ENCODE measurements at regions of chr3 and their contacts with region 1.

Region 1: GRCh38 chr3:100603469-100603868 is 5.9 kb upstream of the ADGRG7 start:
- DNase-seq: peak; percentile 44 to 63
- H3K4me3 ChIP-seq: no peak overlapping the region
- H3K4me3 Mint-ChIP-seq: peak overlapping the region; percentile 69
- H3K27ac Mint-ChIP-seq: peak overlapping the region; percentile 81
- H3K4me1 ChIP-seq: peaks cover 37% of the 10 kb centered on the region
- H3K4me1 Mint-ChIP-seq: peaks cover 47% of the 10 kb centered on the region
- H3K27me3 ChIP-seq: no peaks in the 10 kb centered on the region
- H3K27me3 Mint-ChIP-seq: no peaks in the 10 kb centered on the region
- CTCF ChIP-seq: peak; percentile 32 to 68

Region 2: GRCh38 chr3:99997293-99997692 is 606.2 kb before region 1 on chr3:
- CTCF ChIA-PET with region 1: no interaction called
- POLR2A ChIA-PET with region 1: no interaction called
- intact Hi-C with region 1: no loop called
- DNase-seq: no peak
- H3K4me3 ChIP-seq: no peak overlapping the region
- H3K4me3 Mint-ChIP-seq: no peak overlapping the region
- H3K27ac Mint-ChIP-seq: no peak overlapping the region
- H3K4me1 ChIP-seq: peaks cover 5% of the 10 kb centered on the region
- H3K4me1 Mint-ChIP-seq: peaks cover 6% of the 10 kb centered on the region
- H3K27me3 ChIP-seq: no peaks in the 10 kb centered on the region
- H3K27me3 Mint-ChIP-seq: no peaks in the 10 kb centered on the region
- CTCF ChIP-seq: no peak

Region 3: GRCh38 chr3:100455841-100456550 is 147.5 kb before region 1 on chr3:
- CTCF ChIA-PET with region 1: no interaction called
- POLR2A ChIA-PET with region 1: no interaction called
- intact Hi-C with region 1: no loop called
- DNase-seq: no peak
- H3K4me3 ChIP-seq: no peak overlapping the region
- H3K4me3 Mint-ChIP-seq: no peak overlapping the region
- H3K27ac Mint-ChIP-seq: no peak overlapping the region
- H3K4me1 ChIP-seq: no peaks in the 10 kb centered on the region
- H3K4me1 Mint-ChIP-seq: no peaks in the 10 kb centered on the region
- H3K27me3 ChIP-seq: no peaks in the 10 kb centered on the region
- H3K27me3 Mint-ChIP-seq: no peaks in the 10 kb centered on the region
- CTCF ChIP-seq: no peak

Region 4: DNA sequence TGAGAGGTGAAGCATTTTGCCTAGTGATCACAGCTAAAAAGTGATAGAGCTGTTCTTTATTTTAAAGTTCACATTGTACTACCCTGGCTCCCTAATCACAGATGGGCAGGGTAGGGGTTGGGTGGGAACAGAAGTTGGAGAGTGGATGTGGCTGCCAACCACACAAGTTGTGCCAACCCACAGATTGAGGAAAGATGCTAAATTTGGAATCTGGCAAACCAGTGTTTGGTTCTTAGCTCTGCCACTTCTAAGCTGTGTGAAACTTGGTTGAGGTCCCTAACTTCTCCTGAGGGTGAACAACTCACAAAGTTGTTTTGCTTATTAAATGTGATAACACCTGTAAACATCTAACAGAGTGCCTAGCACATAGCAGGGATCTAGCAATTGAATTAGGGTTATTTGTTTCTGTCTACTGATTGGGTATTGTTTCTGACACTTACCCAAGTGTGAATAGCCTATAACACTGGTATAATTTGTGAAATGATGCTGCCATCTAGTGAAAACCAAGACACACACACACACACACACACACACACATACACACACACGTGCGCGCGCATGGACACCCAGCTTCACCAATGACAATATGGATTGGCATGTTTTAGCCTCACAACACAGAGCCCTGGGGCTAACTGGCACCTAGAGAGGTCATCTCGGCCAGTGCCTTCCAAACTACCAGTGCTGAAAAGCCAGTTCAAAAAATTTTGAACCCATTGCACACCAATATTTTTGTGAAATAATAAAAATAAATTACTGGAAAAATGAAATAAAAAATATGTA is 31.2 kb after region 1 on chr3:
- CTCF ChIA-PET with region 1: interaction called, 38 read pairs
- POLR2A ChIA-PET with region 1: no interaction called
- intact Hi-C with region 1: loop called (anchors 1 kb)
- DNase-seq: peak; percentile 80 to 84
- H3K4me3 ChIP-seq: 0 out of 2 replicates have a peak overlapping the region, but pooled peaks have one; percentile 2
- H3K4me3 Mint-ChIP-seq: peak overlapping the region; percentile 69
- H3K27ac Mint-ChIP-seq: peak overlapping the region; percentile 63
- H3K4me1 ChIP-seq: peaks cover 35% of the 10 kb centered on the region
- H3K4me1 Mint-ChIP-seq: peaks cover 12% of the 10 kb centered on the region
- H3K27me3 ChIP-seq: no peaks in the 10 kb centered on the region
- H3K27me3 Mint-ChIP-seq: no peaks in the 10 kb centered on the region
- CTCF ChIP-seq: no peak

Region 5: GRCh38 chr3:100708967-100709841 is 105.7 kb after region 1 on chr3 and contains the start of gene TFG:
- CTCF ChIA-PET with region 1: interaction called, 20 read pairs
- POLR2A ChIA-PET with region 1: no interaction called
- intact Hi-C with region 1: loop called (anchors 1 kb)
- DNase-seq: peak; percentile 98
- H3K4me3 ChIP-seq: peak within 1 kb of the TSS; percentile 88
- H3K4me3 Mint-ChIP-seq: peak within 1 kb of the TSS; percentile 80
- H3K27ac Mint-ChIP-seq: peak within 1 kb of the TSS; percentile 98
- H3K4me1 ChIP-seq: peaks cover 21% of the 10 kb centered on the region
- H3K4me1 Mint-ChIP-seq: peaks cover 31% of the 10 kb centered on the region
- H3K27me3 ChIP-seq: no peaks in the 10 kb centered on the region
- H3K27me3 Mint-ChIP-seq: peaks cover 4% of the 10 kb centered on the region
- CTCF ChIP-seq: no peak
- total RNA-seq, gene TFG: 128 and 138 TPM in 2 replicates

Region 6: DNA sequence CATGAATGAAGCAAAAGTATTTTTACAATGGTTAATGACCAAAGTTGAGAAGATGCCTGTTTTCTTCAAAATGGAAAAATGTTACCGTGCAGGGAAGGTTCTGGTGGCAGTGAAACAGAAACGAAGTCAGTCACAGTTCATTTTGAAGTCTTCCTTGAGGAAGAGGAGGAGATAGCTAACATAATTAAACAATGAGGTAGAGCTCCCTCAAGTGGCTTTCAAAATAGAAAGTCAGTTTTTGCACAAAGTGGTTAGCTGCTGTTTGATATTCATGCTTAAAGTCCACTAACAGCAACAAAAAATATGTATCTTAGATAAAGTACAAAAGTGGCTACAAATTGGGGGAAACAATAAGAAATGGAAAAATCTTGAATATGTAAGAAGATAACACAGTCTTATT is 193.1 kb after region 1 on chr3:
- CTCF ChIA-PET with region 1: interaction called, 11 read pairs
- POLR2A ChIA-PET with region 1: no interaction called
- intact Hi-C with region 1: loop called (anchors 2 kb)
- DNase-seq: no peak
- H3K4me3 ChIP-seq: no peak overlapping the region
- H3K4me3 Mint-ChIP-seq: no peak overlapping the region
- H3K27ac Mint-ChIP-seq: no peak overlapping the region
- H3K4me1 ChIP-seq: no peaks in the 10 kb centered on the region
- H3K4me1 Mint-ChIP-seq: no peaks in the 10 kb centered on the region
- H3K27me3 ChIP-seq: no peaks in the 10 kb centered on the region
- H3K27me3 Mint-ChIP-seq: peaks cover 12% of the 10 kb centered on the region
- CTCF ChIP-seq: peak in 1 of 2 experiments; percentile 6

Measured in Caco-2 (cell line).